CD8-positive, alpha-beta T cell (primary cell): ENCODE measurements at regions of chr5 and their contacts with region 1.

Region 1: DNA sequence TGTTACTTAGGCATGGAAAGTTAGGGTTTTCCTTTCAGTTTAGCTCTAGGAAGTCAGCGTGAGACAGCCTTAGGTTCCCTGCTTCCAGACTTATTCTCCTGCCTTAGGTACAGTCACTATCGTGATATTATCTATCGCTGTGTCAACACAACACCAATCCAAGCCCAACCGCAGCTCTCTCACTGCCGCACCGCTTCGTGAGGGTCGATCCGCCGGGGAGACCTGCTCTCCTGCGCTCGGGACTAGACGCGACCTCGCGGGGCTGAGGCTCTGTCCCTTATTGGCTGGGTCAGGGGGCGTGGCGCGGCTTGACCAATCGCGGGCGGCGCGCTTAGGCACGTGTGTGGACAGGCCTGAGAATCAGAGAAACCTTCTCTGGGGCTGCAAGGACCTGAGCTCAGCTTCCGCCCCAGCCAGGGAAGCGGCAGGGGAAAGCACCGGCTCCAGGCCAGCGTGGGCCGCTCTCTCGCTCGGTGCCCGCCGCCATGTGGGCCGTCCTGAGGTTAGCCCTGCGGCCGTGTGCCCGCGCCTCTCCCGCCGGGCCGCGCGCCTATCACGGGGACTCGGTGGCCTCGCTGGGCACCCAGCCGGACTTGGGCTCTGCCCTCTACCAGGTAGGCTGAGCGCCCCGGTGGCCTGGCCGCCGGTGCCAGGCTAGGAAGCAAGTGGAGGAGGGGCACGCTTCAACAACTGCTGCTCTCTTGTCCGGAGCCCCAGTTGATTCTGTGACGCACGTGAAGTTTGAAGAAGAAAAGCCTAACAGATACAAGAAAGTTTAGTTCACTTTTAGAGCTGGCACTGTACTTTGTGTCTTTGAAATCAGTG is at the start of gene MCCC2:
- DNase-seq: peak; percentile 93 to 97 (median 96)
- ATAC-seq: peak; percentile 97
- H3K4me3 ChIP-seq: peak within 1 kb of the TSS; percentile 82 to 88
- H3K4me3 Mint-ChIP-seq: peak within 1 kb of the TSS; percentile 96
- H3K27ac ChIP-seq: peak within 1 kb of the TSS; percentile 72 to 95
- H3K27ac Mint-ChIP-seq: peak within 1 kb of the TSS; percentile 98
- H3K4me1 ChIP-seq: peaks cover 32% of the 10 kb centered on the region
- H3K4me1 Mint-ChIP-seq: peaks cover 45% of the 10 kb centered on the region
- H3K27me3 ChIP-seq: no peaks in the 10 kb centered on the region
- H3K27me3 Mint-ChIP-seq: no peaks in the 10 kb centered on the region
- CTCF ChIP-seq: no peak
- total RNA-seq, gene MCCC2: 16.0 to 18.2 TPM

Region 2: DNA sequence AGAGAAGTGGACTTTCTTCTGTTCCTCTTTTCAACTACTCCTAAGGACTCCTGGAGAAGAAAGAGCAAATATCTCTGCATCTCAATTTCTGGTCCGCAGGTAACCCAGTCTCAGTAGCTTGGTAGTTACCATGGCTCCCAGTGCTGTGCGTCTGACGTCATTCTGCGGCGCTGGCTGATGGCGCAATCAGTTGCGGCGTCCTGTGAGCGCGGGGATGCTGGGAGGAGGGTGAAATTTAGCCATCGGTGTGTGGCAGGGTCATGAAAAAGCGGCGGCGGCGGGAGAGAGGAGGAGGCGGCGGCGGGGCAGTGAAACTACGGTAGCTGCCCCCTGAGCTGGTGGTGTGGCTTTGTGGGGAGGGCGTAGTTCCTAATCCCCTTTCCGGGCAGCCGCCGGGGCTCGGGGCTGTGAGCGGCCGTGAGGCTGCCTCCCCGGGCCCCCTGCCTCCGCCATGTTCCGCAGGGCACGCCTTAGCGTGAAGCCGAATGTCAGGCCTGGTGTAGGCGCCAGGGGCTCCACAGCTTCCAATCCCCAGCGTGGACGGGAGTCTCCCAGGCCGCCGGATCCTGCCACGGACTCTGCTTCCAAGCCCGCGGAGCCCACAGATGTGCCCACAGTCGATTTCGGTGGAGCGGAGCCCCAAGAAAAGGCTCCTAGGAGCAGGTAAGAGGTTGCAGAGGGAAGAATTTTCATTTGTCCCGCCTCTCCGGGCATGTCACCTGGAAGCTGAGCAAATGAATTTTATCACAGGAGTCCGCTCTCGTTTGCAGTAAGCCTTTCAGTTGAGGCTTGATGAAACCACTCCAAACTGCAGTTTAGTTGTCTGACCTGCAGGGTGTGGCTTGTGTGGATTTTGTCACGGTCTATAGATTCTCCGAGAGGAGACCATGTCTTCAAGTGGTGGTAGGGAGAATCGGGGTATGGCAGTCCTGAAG is 131.5 kb before region 1 on chr5 and contains the start of gene BDP1:
- CTCF ChIA-PET with region 1: no interaction called
- POLR2A ChIA-PET with region 1: no interaction called
- intact Hi-C with region 1: loop called (anchors 1 to 2 kb)
- DNase-seq: peak; percentile 93 to 99 (median 97)
- ATAC-seq: peak; percentile 87
- H3K4me3 ChIP-seq: peak within 1 kb of the TSS; percentile 81 to 84
- H3K4me3 Mint-ChIP-seq: peak within 1 kb of the TSS; percentile 100
- H3K27ac ChIP-seq: peak within 1 kb of the TSS; percentile 90 to 92
- H3K27ac Mint-ChIP-seq: peak within 1 kb of the TSS; percentile 100
- H3K4me1 ChIP-seq: peaks cover 19% of the 10 kb centered on the region
- H3K4me1 Mint-ChIP-seq: peaks cover 29% of the 10 kb centered on the region
- H3K27me3 ChIP-seq: peaks cover 0 to 10% of the 10 kb centered on the region in 2 experiments
- H3K27me3 Mint-ChIP-seq: peaks cover 2% of the 10 kb centered on the region
- CTCF ChIP-seq: peak; percentile 48
- total RNA-seq, gene BDP1: 29.6 to 33.2 TPM

Region 3: GRCh38 chr5:71537687-71538086 is 49.5 kb before region 1 on chr5:
- CTCF ChIA-PET with region 1: no interaction called
- POLR2A ChIA-PET with region 1: no interaction called
- intact Hi-C with region 1: loop called in 1 of 2 experiments (anchors 5 kb)
- DNase-seq: no peak
- ATAC-seq: no peak
- H3K4me3 ChIP-seq: no peak overlapping the region
- H3K4me3 Mint-ChIP-seq: no peak overlapping the region
- H3K27ac ChIP-seq: no peak overlapping the region
- H3K27ac Mint-ChIP-seq: peak overlapping the region; percentile 47
- H3K4me1 ChIP-seq: no peaks in the 10 kb centered on the region
- H3K4me1 Mint-ChIP-seq: peaks cover 4% of the 10 kb centered on the region
- H3K27me3 ChIP-seq: no peaks in the 10 kb centered on the region
- H3K27me3 Mint-ChIP-seq: no peaks in the 10 kb centered on the region
- CTCF ChIP-seq: no peak

Region 4: GRCh38 chr5:71601222-71602041 is 14.3 kb after region 1 on chr5:
- CTCF ChIA-PET with region 1: interaction called, 21 read pairs
- POLR2A ChIA-PET with region 1: interaction called, 13 read pairs
- intact Hi-C with region 1: loop called (anchors 1 to 2 kb)
- DNase-seq: peak; percentile 25 to 85 (median 74)
- ATAC-seq: peak; percentile 85
- H3K4me3 ChIP-seq: no peak overlapping the region
- H3K4me3 Mint-ChIP-seq: no peak overlapping the region
- H3K27ac ChIP-seq: peak overlapping the region; percentile 14 to 73
- H3K27ac Mint-ChIP-seq: peak overlapping the region; percentile 86
- H3K4me1 ChIP-seq: peaks cover 17% of the 10 kb centered on the region
- H3K4me1 Mint-ChIP-seq: peaks cover 26% of the 10 kb centered on the region
- H3K27me3 ChIP-seq: no peaks in the 10 kb centered on the region
- H3K27me3 Mint-ChIP-seq: no peaks in the 10 kb centered on the region
- CTCF ChIP-seq: peak; percentile 72